ENCODE measurements at regions of chr3 and their contacts with region 1.

Region 1: DNA sequence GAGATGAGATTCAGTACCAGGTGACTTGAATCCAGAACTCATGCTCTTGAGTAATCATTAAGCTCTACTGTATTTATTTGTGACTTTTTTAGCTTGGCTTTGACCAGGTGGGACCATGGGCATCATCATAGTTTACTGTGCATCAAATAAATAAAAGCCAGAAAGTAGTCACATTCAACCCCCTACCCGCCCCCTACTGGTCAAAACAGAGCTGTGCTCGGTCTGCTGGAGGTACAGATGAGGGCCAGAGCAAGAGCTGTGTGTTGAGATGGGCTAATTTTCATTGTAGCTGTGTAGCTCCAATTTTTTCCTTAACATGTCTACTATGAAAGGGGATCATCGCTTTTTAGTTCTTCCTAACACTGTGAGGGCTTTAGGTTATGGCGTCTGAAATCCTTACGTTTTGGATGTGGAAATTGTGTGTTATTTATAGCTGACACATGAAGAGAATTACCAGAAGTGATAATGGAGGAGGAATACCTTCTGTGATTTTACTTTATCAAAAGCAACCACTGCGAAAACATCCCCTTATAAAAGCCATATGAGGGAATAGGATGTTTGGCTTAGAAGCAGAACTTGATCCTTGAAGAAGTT is 375.1 kb downstream of the PTPRG start:
- DNase-seq: no peak
- ATAC-seq: peak; percentile 88
- H3K4me3 ChIP-seq: no peak overlapping the region
- H3K27ac ChIP-seq: no peak overlapping the region
- H3K4me1 ChIP-seq: peaks cover 3 to 4% of the 10 kb centered on the region in 2 experiments; a peak in 1 of 4 replicates
- H3K27me3 ChIP-seq: no peaks in the 10 kb centered on the region
- CTCF ChIP-seq: peak; percentile 37 to 88 (median 86); a peak in 5 of 6 replicates
- POLR2A ChIP-seq: no peak
- RAD21 ChIP-seq: peak; percentile 50

Region 2: GRCh38 chr3:61919402-61919801 is 17.0 kb before region 1 on chr3:
- CTCF ChIA-PET with region 1: interaction called, 14 read pairs
- POLR2A ChIA-PET with region 1: no interaction called
- RAD21 ChIA-PET with region 1: no interaction called
- intact Hi-C with region 1: no loop called
- DNase-seq: no peak
- ATAC-seq: no peak
- H3K4me3 ChIP-seq: no peak overlapping the region
- H3K27ac ChIP-seq: no peak overlapping the region
- H3K4me1 ChIP-seq: no peaks in the 10 kb centered on the region
- H3K27me3 ChIP-seq: no peaks in the 10 kb centered on the region
- CTCF ChIP-seq: peak in 1 of 3 experiments; percentile 17; a peak in 1 of 6 replicates
- POLR2A ChIP-seq: no peak
- RAD21 ChIP-seq: no peak

Region 3: DNA sequence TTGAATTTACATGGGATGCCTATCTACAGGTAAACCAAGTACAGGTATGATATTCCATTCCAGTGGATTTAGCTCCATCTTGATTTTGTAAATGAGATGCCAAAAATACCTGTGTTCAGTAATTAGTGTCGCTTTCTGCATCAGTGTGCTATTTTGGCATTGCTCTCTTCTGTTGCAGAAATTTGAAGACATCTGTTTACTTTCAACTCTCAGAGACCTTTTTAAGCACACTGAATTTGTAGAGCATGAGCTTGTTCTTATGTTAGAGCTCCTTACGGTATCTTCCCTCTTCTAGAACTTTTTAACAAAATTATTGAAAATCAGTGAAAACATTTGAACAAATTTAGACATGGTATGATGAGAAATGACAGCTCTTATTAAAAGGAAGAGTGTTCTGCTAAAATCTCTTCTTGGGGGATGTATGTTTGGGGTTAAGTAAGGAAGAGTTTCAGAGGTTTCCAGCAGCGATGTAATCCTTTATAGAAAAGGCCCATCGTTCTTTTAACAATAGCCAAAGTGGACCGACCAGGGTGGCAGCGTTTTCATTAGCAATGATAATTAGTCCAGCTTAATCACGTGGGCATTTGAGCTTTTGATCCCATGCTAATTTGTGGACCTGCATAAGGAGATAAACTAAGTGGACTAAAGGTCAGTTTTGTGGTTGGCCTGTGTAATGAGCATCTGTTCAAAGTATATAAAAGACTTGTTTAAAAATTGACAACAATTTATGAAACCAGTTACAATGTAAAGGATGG is 10.3 kb after region 1 on chr3:
- CTCF ChIA-PET with region 1: interaction called, 17 read pairs
- POLR2A ChIA-PET with region 1: no interaction called
- RAD21 ChIA-PET with region 1: interaction called in 1 of 2 experiments, 5 read pairs
- intact Hi-C with region 1: no loop called
- DNase-seq: no peak
- ATAC-seq: no peak
- H3K4me3 ChIP-seq: no peak overlapping the region
- H3K27ac ChIP-seq: no peak overlapping the region
- H3K4me1 ChIP-seq: no peaks in the 10 kb centered on the region
- H3K27me3 ChIP-seq: no peaks in the 10 kb centered on the region
- CTCF ChIP-seq: no peak
- POLR2A ChIP-seq: no peak
- RAD21 ChIP-seq: no peak

Region 4: GRCh38 chr3:62201438-62202035 is 265.1 kb after region 1 on chr3:
- CTCF ChIA-PET with region 1: no interaction called
- POLR2A ChIA-PET with region 1: no interaction called
- RAD21 ChIA-PET with region 1: no interaction called
- intact Hi-C with region 1: no loop called
- DNase-seq: peak; percentile 16
- ATAC-seq: peak; percentile 80
- H3K4me3 ChIP-seq: no peak overlapping the region
- H3K27ac ChIP-seq: no peak overlapping the region
- H3K4me1 ChIP-seq: no peaks in the 10 kb centered on the region
- H3K27me3 ChIP-seq: no peaks in the 10 kb centered on the region
- CTCF ChIP-seq: peak; percentile 38 to 58 (median 42); a peak in 5 of 6 replicates
- POLR2A ChIP-seq: no peak
- RAD21 ChIP-seq: peak; percentile 58

Measured in HCT116 (cell line).